CD4-positive, alpha-beta T cell (primary cell): ENCODE measurements at regions of chr11 and their contacts with region 1.

Region 1: DNA sequence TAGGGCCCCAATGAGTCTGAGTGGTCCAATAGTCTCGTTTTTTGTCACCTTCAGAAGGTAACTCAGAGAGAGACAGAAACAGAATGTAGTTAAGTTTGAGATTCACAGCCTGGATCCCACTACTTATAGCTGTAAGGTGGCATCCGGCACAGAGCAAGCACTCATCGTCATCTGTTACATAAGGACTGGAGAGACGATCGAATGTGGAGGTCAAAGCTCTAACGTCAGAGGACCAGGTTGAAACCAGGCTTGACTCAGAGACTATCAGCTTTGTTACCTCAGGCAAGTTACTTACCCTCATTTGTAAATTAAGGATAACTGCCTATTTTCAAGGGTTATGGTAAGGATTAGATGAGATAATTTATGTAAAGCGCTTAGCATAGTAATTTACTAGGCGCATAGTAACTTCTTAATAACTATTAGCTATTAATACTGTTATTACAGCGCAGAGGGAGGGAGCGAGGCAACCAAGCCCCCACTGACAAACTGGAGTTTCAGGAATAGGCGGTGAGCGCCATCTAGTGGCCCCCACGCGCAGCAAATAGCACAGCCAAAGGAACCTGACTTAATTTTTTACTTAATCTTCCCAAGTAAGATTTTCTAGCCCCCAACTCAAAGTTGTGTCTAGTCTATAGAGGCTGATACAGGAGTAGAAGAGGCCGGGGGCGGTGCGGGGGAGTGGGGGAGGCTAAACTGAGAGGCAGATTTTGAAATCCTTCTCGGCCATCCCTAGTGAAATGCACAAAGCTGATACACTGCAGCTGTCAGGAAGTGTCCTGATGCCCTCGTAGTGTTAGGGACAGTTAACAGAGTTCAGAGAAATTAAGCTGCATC is 29.0 kb upstream of the API5 start:
- DNase-seq: peak in 12 of 14 experiments; percentile 5 to 59 (median 22)
- ATAC-seq: peak; percentile 37
- H3K4me3 ChIP-seq: no peak overlapping the region
- H3K4me3 Mint-ChIP-seq: no peak overlapping the region
- H3K27ac ChIP-seq: no peak overlapping the region
- H3K27ac Mint-ChIP-seq: no peak overlapping the region
- H3K4me1 ChIP-seq: peaks cover 3% of the 10 kb centered on the region
- H3K4me1 Mint-ChIP-seq: no peaks in the 10 kb centered on the region
- H3K27me3 ChIP-seq: peaks cover 0 to 5% of the 10 kb centered on the region in 2 experiments
- H3K27me3 Mint-ChIP-seq: peaks cover 48% of the 10 kb centered on the region
- CTCF ChIP-seq: peak; percentile 78

Region 2: DNA sequence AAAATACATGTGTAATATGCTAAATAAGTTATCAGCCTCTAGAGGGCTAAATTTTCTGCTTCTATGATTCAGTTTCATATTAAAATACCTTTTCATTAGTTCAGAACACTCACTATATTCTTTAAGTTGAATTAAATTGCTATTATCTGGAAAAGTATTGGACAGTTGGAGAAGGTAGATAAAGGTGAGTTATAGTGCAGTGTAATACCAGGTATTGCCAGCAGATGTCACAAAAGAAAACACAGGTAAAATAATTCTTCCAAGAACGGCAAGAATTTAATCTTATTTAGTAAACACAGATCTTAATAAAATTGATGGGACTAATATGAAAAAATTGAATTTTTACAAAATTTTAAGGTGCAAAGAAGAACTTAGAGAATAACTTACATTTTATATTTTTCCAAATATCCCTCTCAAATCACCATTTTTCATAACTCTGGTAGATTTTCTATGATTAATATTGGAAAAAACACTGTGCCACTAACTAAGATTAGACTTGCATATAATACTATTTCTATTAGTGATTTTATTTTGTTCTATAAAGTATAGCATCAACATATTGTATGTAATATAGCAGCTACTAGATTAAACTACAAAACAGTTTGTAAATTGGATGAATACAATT is 1821.7 kb before region 1 on chr11:
- CTCF ChIA-PET with region 1: no interaction called
- POLR2A ChIA-PET with region 1: no interaction called
- intact Hi-C with region 1: loop called (anchors 5 kb)
- DNase-seq: peak in 1 of 14 experiments; percentile 4
- ATAC-seq: no peak
- H3K4me3 ChIP-seq: no peak overlapping the region
- H3K4me3 Mint-ChIP-seq: no peak overlapping the region
- H3K27ac ChIP-seq: no peak overlapping the region
- H3K27ac Mint-ChIP-seq: no peak overlapping the region
- H3K4me1 ChIP-seq: no peaks in the 10 kb centered on the region
- H3K4me1 Mint-ChIP-seq: no peaks in the 10 kb centered on the region
- H3K27me3 ChIP-seq: peaks cover 0 to 4% of the 10 kb centered on the region in 2 experiments
- H3K27me3 Mint-ChIP-seq: peaks cover 25% of the 10 kb centered on the region
- CTCF ChIP-seq: peak; percentile 53

Region 3: DNA sequence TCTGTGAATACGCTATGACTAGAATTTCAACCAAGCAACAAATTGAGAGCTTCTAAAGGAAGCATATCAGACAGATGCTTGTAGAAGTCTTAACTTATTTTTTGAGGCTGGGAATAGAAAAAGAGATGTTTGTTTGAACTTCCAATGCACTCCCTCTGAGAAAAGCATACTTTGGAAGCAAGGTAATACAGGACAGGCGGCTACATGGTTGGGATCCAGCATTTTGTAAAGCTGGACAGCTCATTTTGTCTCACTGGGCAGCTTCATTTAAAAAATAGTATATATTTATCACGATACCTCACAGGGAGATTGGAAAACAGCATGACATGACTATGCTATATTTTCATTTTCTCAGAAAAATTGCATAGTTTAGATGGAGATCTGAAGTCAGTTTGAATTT is 792.3 kb before region 1 on chr11:
- CTCF ChIA-PET with region 1: no interaction called
- POLR2A ChIA-PET with region 1: no interaction called
- intact Hi-C with region 1: no loop called
- DNase-seq: no peak
- ATAC-seq: no peak
- H3K4me3 ChIP-seq: no peak overlapping the region
- H3K4me3 Mint-ChIP-seq: no peak overlapping the region
- H3K27ac ChIP-seq: no peak overlapping the region
- H3K27ac Mint-ChIP-seq: no peak overlapping the region
- H3K4me1 ChIP-seq: no peaks in the 10 kb centered on the region
- H3K4me1 Mint-ChIP-seq: no peaks in the 10 kb centered on the region
- H3K27me3 ChIP-seq: no peaks in the 10 kb centered on the region
- H3K27me3 Mint-ChIP-seq: no peaks in the 10 kb centered on the region
- CTCF ChIP-seq: no peak

Region 4: DNA sequence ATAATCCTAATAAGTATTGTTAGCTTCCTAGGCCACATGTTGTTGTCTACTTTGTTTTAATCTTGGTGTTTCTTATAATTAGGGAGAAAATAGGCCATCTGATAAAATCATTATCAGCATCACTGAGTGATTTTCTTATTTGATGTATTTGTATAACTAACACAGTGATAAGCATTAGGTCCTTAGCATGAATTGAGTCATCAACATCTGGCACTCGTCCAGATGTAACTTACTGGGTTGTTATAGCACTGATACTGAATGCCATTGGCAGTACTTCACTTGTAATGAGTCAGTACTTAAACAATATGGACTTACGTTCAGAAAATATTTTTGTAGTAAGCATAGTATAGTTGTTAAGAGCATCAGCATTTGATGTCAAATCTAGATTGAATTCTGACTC is 45.2 kb after region 1 on chr11:
- CTCF ChIA-PET with region 1: no interaction called
- POLR2A ChIA-PET with region 1: no interaction called
- intact Hi-C with region 1: no loop called
- DNase-seq: no peak
- ATAC-seq: no peak
- H3K4me3 ChIP-seq: no peak overlapping the region
- H3K4me3 Mint-ChIP-seq: no peak overlapping the region
- H3K27ac ChIP-seq: no peak overlapping the region
- H3K27ac Mint-ChIP-seq: no peak overlapping the region
- H3K4me1 ChIP-seq: no peaks in the 10 kb centered on the region
- H3K4me1 Mint-ChIP-seq: no peaks in the 10 kb centered on the region
- H3K27me3 ChIP-seq: no peaks in the 10 kb centered on the region
- H3K27me3 Mint-ChIP-seq: no peaks in the 10 kb centered on the region
- CTCF ChIP-seq: no peak